ENCODE measurements at regions of chr5 and their contacts with region 1.

Region 1: DNA sequence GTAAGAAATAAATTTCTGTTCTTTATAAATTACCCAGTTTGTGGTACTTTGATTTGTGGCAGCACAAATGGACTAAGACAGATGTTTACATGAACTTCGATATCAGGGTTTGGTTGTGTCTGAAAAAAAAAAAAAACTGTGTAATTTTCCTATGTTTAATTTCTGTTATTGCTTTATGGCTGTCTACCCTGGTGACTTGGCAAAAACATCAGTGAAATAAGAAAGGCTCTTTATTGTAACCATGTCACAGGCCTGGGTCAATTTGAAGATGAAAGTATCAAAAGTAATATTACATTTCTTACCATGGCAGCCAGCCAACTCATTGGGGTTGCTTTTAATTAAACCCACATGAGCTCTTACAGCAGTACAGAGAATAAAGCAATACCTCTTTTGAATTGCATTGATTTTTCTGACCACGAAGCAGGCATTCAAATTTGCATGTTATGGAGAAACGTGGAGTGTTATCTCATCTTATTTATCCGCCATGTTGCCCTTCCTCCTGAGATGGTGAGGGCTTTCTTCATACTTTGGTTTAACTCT is 20.6 kb upstream of the SV2C start:
- DNase-seq: no peak
- H3K4me3 Mint-ChIP-seq: no peak overlapping the region
- H3K27ac Mint-ChIP-seq: no peak overlapping the region
- H3K4me1 Mint-ChIP-seq: no peaks in the 10 kb centered on the region
- H3K27me3 Mint-ChIP-seq: peaks cover 18% of the 10 kb centered on the region

Region 2: GRCh38 chr5:75885849-75886598 is 176.5 kb before region 1 on chr5:
- intact Hi-C with region 1: no loop called
- DNase-seq: no peak
- H3K4me3 Mint-ChIP-seq: no peak overlapping the region
- H3K27ac Mint-ChIP-seq: no peak overlapping the region
- H3K4me1 Mint-ChIP-seq: no peaks in the 10 kb centered on the region
- H3K27me3 Mint-ChIP-seq: no peaks in the 10 kb centered on the region

Region 3: GRCh38 chr5:75964008-75964407 is 98.6 kb before region 1 on chr5:
- intact Hi-C with region 1: no loop called
- DNase-seq: no peak
- H3K4me3 Mint-ChIP-seq: no peak overlapping the region
- H3K27ac Mint-ChIP-seq: no peak overlapping the region
- H3K4me1 Mint-ChIP-seq: no peaks in the 10 kb centered on the region
- H3K27me3 Mint-ChIP-seq: peaks cover 4% of the 10 kb centered on the region

Region 4: GRCh38 chr5:76014005-76014404 is 48.6 kb before region 1 on chr5:
- intact Hi-C with region 1: loop called (anchors 2 kb)
- DNase-seq: no peak
- H3K4me3 Mint-ChIP-seq: no peak overlapping the region
- H3K27ac Mint-ChIP-seq: no peak overlapping the region
- H3K4me1 Mint-ChIP-seq: no peaks in the 10 kb centered on the region
- H3K27me3 Mint-ChIP-seq: peaks cover 12% of the 10 kb centered on the region